Left cardiac atrium (tissue), 4 donors: ENCODE measurements at regions of chr1 and their contacts with region 1.

Region 1: DNA sequence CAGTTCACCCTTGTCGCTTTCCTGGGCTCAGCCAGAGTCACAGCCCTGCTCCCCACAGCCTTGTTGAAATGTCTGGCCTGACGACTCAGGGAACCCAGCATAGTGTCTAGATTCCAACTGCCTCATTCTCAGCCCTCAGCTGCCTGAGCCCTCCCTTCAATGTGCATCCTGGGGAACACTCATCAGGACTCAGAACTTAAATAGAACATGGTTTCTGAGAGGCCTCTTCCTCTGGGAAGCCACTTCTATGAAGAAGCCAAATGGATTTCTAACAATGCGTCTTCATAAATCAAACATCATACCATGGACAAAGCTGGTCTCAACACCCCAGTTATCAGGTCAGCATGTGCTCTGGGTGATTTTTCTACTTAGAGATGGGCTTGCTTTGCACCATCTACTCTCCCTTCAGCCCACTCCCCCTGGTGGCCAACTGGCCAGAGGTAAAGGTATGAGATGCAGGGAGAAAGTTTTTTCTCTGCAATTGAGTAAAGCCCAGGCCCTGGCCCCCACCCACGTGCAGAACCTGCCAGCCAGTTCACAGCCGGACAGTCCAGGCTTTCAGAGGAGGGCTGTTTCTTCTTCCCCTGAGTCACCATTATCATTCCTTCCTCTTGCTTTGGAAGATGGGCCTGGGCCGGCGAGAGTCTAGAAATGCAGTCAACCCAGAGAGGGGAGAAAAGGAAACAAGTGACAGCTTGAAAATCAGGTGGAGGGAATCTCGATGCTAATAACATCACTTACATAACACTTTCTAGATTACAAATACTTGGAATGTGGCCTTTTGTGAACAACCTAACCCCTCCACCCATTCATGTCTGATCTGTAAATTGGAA is 32.1 kb downstream of the CD244 start:
- DNase-seq: peak; percentile 69
- ATAC-seq: peak; percentile 55 to 84

Region 2: GRCh38 chr1:160726498-160727315 is 103.8 kb before region 1 on chr1:
- intact Hi-C with region 1: loop called in 1 of 2 experiments (anchors 5 kb)
- DNase-seq: peak; percentile 49
- ATAC-seq: peak; percentile 83 to 93

Region 3: DNA sequence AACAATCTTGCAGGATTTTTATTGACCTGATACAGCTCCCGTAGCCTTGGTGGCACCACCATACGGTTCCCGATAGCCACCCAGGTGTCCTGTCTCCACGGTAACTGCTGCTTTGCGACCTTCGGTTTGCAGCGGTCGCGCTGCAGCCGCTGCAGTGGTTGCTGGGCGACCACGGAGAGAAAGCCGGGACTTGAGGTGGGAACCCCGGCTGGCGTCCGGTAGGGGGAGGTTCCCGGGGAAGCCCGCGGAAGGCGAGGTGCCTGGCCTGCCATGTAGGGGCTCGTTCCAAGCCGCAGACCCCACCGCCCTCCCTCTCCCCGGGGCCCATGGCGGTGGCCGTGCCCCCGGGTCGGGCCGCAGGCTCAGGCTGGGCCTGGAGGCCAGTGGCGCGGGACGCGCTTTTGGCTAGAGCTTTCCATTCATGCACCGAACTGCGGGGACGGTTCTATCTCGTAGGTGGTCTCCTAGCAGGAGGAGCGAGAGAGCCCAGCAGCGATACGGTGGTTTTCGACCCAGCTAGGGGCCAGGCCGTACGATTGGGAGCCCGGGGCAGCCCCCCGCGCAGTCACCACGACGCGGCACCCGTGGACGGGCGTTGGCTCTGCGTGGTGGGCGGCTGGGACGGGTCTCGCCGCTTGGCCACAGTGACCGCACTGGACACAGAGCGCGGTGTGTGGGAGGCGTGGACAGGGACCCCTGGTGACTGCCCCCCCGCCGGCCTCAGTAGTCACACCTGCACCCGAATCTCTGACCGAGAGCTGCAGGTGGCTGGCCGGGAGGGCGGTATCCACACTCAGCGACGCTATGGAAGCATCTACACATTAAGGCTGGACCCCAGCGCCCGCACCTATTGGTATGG is 267.9 kb after region 1 on chr1 and contains the start of gene KLHDC9:
- intact Hi-C with region 1: loop called (anchors 10 kb)
- DNase-seq: peak; percentile 82
- ATAC-seq: peak; percentile 66 to 84
- total RNA-seq, gene KLHDC9: 3.5 to 5.7 TPM